ENCODE measurements at regions of chr1 and their contacts with region 1.

Region 1: GRCh38 chr1:152440635-152441471 is 26.8 kb upstream of the CRNN start:
- DNase-seq: peak; percentile 89
- H3K4me3 Mint-ChIP-seq: no peak overlapping the region
- H3K27ac Mint-ChIP-seq: no peak overlapping the region
- H3K4me1 Mint-ChIP-seq: peaks cover 24% of the 10 kb centered on the region
- H3K27me3 Mint-ChIP-seq: no peaks in the 10 kb centered on the region
- CTCF ChIP-seq: peak; percentile 91

Region 2: GRCh38 chr1:152347116-152347728 is 93.6 kb before region 1 on chr1:
- CTCF ChIA-PET with region 1: interaction called, 19 read pairs
- POLR2A ChIA-PET with region 1: interaction called, 5 read pairs
- intact Hi-C with region 1: loop called (anchors 1 kb)
- DNase-seq: peak; percentile 90
- H3K4me3 Mint-ChIP-seq: no peak overlapping the region
- H3K27ac Mint-ChIP-seq: no peak overlapping the region
- H3K4me1 Mint-ChIP-seq: no peaks in the 10 kb centered on the region
- H3K27me3 Mint-ChIP-seq: peaks cover 43% of the 10 kb centered on the region
- CTCF ChIP-seq: peak; percentile 98

Region 3: DNA sequence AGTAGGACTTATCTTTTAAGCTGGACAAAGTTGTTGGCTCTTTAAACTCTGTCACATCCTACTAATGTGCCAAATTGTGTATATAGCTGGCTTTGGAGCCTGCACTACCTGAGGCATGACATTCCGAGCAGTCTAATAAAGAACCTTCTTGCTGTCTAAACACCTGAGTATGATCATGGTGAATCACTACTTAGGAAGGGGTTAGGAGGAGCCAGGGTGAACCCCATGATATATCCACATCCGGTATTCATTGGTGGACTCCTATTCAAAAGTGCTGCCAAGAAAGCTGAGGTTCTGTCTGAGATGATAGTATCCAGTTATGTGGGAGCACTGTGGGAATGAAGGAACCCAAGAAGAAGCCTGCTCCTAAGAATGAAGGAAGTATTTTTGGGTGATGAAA is 53.9 kb before region 1 on chr1:
- CTCF ChIA-PET with region 1: interaction called, 10 read pairs
- POLR2A ChIA-PET with region 1: no interaction called
- intact Hi-C with region 1: no loop called
- DNase-seq: peak; percentile 26
- H3K4me3 Mint-ChIP-seq: no peak overlapping the region
- H3K27ac Mint-ChIP-seq: no peak overlapping the region
- H3K4me1 Mint-ChIP-seq: peaks cover 20% of the 10 kb centered on the region
- H3K27me3 Mint-ChIP-seq: peaks cover 89% of the 10 kb centered on the region
- CTCF ChIP-seq: no peak

Region 4: DNA sequence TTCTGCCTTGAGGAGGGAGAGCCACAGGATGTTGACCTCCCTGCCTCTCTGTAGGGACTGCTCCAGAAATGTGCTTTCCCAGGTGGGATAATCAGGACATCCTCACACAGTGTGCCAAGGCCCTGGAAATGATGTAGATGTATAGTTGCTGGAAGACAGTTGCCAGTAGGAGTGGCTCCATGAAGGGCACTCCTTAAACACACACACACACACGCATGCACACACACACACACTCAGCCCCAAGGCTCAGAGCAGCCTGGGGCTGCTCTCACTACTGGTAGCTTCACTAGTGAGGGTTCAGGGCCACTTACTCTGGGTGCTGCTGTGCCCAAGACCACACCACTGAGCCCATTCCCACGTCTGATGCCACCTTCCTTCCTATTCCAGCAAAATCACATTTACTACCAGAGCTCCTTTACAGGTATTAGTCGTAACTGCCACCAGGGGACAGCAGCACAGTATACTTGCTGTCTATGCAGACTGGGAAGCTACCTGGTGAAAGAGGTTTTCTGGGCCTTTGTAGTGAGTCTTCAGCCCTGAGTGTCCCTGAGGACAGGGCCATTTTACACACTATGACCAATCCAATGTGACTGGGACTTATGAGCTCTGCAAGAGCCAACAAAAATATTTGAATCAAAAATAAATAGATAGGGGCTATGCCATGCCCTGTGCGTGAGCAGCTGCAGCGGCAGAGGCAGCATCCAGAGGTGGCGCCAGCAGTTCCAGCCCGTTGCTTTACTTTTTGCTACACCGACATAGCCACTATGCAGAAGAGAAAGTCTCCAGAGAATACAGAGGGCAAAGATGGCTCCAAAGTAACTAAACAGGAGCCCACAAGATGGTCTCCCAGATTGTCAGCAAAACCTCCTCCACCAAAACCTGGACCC is 41.8 kb before region 1 on chr1:
- CTCF ChIA-PET with region 1: interaction called, 63 read pairs
- POLR2A ChIA-PET with region 1: interaction called, 4 read pairs
- intact Hi-C with region 1: loop called (anchors 1 kb)
- DNase-seq: peak; percentile 73
- H3K4me3 Mint-ChIP-seq: no peak overlapping the region
- H3K27ac Mint-ChIP-seq: no peak overlapping the region
- H3K4me1 Mint-ChIP-seq: peaks cover 6% of the 10 kb centered on the region
- H3K27me3 Mint-ChIP-seq: peaks cover 86% of the 10 kb centered on the region
- CTCF ChIP-seq: peak; percentile 74

Region 5: DNA sequence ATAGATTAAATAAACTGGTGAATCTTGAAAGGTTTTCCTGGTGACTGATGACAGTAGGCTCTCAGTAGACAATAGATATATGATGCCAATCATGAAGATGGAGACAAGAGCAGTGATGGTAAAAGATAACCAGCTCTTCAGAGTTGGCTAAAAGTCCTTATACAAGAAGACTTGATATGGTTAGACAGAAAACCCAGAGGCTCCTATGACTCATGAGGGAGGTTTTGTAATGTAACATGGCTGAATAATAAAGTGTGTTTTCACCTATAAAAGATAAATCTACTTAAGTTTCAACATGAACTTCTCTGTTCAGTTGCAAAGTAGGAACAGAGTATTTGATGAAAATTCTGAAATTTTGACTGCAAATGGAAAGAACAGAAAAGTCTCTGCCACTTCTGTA is 14.1 kb before region 1 on chr1:
- CTCF ChIA-PET with region 1: interaction called, 28 read pairs
- POLR2A ChIA-PET with region 1: interaction called, 3 read pairs
- intact Hi-C with region 1: no loop called
- DNase-seq: peak; percentile 25
- H3K4me3 Mint-ChIP-seq: no peak overlapping the region
- H3K27ac Mint-ChIP-seq: no peak overlapping the region
- H3K4me1 Mint-ChIP-seq: peaks cover 6% of the 10 kb centered on the region
- H3K27me3 Mint-ChIP-seq: peaks cover 13% of the 10 kb centered on the region
- CTCF ChIP-seq: no peak

Measured in MCF 10A (cell line).